ENCODE measurements at regions of chr3 and their contacts with region 1.

Region 1: GRCh38 chr3:52934630-52935530 is 37.5 kb upstream of the STIMATE start:
- DNase-seq: no peak
- ATAC-seq: peak; percentile 71

Region 2: DNA sequence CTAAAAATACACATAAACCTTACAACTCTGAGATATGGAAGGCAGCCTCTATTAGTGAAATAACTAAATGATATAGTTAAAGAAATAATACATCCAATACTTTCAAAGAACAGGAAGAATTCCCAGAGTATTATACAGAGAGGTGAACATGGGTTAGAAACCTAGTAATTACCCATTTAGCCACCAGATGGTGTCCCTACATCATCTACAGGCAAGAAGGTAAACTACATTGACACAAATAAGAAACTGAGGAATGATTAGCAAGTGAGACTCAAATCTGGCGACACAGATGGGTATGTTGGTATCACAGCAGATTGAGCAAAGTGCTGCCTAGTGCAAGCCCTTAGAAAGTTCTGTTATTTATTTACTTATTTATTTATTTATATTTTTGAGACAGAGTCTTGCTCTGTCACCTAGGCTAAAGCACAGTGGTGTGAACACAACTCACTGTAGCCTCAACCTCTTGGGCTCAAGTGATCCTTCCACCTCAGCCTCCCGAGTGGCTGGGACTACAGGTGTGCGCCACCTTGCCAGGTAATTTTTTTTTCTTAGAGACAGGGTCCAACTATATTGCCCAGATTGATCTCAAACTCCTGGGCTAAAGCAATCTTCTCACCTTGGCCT is 192.3 kb before region 1 on chr3:
- intact Hi-C with region 1: loop called (anchors 10 kb)
- DNase-seq: no peak
- ATAC-seq: no peak